ENCODE measurements at regions of chr19 and their contacts with region 1.

Region 1: GRCh38 chr19:38888876-38889275 is 10.5 kb downstream of the SIRT2 start:
- DNase-seq: no peak
- H3K4me3 ChIP-seq: no peak overlapping the region
- H3K27ac ChIP-seq: no peak overlapping the region
- H3K4me1 ChIP-seq: peaks cover 0 to 4% of the 10 kb centered on the region in 2 experiments; a peak in 1 of 4 replicates
- H3K27me3 ChIP-seq: no peaks in the 10 kb centered on the region
- CTCF ChIP-seq: no peak
- EP300 ChIP-seq: no peak
- RAD21 ChIP-seq: no peak

Region 2: GRCh38 chr19:38869856-38870607 is 18.8 kb before region 1 on chr19:
- CTCF ChIA-PET with region 1: interaction called, 39 read pairs
- POLR2A ChIA-PET with region 1: no interaction called
- DNase-seq: peak; percentile 91
- H3K4me3 ChIP-seq: peak overlapping the region; percentile 31 to 35; a peak in 3 of 4 replicates
- H3K27ac ChIP-seq: no peak overlapping the region
- H3K4me1 ChIP-seq: peaks cover 0 to 15% of the 10 kb centered on the region in 2 experiments; a peak in 1 of 4 replicates
- H3K27me3 ChIP-seq: no peaks in the 10 kb centered on the region
- CTCF ChIP-seq: peak; percentile 71
- EP300 ChIP-seq: no peak
- RAD21 ChIP-seq: peak; percentile 55

Region 3: DNA sequence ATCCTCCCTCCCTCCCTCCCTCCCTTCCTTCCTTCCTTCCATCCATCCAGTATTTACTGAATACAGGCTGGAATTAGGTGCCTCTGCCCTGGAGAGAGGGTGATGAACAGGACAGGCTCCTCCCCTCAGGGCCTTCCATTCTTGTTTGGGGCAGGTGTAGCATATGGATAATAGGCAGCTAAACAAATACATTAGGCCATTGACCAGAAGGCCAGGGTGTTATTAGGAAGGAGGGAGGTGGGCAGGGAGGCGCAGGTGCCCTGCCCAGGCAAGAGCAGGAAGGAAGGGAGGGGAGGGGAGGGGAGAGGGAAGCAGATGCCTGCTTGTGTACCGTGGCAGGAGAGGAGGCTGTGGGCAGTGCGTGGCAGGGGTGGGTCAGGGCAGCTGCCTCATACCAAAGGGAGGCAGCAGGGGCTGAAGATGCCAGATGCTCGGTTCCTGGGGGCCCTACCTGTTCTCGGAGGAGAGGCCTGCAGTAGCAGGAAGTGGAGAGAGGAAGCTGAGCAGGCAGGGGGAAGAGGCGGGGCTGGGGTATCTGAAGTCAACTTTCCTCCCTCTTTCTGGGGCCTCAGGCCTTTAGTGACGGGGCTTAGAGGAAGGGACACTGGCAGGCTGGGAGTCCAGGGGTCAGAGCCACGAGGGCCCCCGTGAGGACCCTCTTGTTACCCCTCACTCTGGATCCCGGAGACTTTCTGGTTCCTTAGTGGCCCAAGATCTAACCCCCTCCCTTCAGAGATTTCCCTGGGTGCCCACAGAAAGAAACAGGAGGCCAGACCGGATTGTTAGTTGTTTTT is 10.9 kb before region 1 on chr19 and contains the start of gene RINL:
- CTCF ChIA-PET with region 1: interaction called, 39 read pairs
- POLR2A ChIA-PET with region 1: interaction called, 3 read pairs
- DNase-seq: peak; percentile 49
- H3K4me3 ChIP-seq: no peak within 1 kb of the TSS
- H3K27ac ChIP-seq: peak within 1 kb of the TSS in 1 of 2 experiments; percentile 63; a peak in 2 of 4 replicates
- H3K4me1 ChIP-seq: peaks cover 0 to 12% of the 10 kb centered on the region in 2 experiments; a peak in 1 of 4 replicates
- H3K27me3 ChIP-seq: no peaks in the 10 kb centered on the region
- CTCF ChIP-seq: no peak
- EP300 ChIP-seq: no peak
- RAD21 ChIP-seq: no peak
- polyA plus RNA-seq, gene RINL: 3.8 and 4.0 TPM in 2 replicates

Region 4: DNA sequence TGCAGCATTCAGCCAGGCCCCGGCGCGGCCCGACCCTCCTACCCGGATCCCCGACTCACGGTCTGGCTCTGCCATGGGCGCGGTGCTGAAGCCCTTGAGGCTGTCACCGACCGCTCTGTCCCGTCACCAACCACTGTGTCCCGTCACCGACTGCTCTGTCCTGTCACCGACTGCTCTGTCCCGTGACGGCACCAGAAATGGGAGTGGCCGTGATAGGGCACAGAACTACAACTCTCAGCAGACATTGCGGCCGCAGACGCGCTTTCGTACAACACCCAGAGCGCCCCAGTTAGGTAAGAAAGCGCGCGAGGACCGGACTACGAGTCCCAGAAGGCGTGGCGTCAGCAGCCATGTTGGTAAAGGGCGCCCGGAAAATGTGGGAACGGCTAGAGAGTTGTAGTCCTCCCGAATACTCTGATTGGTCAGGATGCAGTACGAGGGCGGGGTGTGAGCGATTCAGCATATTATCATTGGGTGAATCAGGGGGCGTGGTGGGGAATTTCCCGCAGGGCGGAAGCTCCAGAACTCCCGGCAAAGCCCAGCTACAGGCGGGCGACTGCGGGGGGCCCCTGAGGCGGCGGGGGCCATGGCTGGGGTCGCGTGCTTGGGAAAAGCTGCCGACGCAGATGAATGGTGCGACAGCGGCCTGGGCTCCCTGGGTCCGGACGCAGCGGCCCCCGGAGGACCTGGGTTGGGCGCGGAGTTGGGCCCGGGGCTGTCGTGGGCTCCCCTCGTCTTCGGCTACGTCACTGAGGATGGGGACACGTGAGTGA is 10.8 kb after region 1 on chr19 and contains the starts of genes NFKBIB and SIRT2:
- CTCF ChIA-PET with region 1: interaction called, 19 read pairs
- POLR2A ChIA-PET with region 1: no interaction called
- DNase-seq: peak; percentile 98
- H3K4me3 ChIP-seq: peak within 1 kb of the TSS; percentile 66 to 92
- H3K27ac ChIP-seq: peak within 1 kb of the TSS; percentile 51 to 77
- H3K4me1 ChIP-seq: peaks cover 0 to 9% of the 10 kb centered on the region in 2 experiments; a peak in 2 of 4 replicates
- H3K27me3 ChIP-seq: no peaks in the 10 kb centered on the region
- CTCF ChIP-seq: no peak
- EP300 ChIP-seq: no peak
- RAD21 ChIP-seq: peak; percentile 22; the same call in 1 of the 2 replicates
- polyA plus RNA-seq, gene NFKBIB: 29.6 and 31.8 TPM in 2 replicates
- polyA plus RNA-seq, gene SIRT2: 37.9 and 39.3 TPM in 2 replicates

Region 5: DNA sequence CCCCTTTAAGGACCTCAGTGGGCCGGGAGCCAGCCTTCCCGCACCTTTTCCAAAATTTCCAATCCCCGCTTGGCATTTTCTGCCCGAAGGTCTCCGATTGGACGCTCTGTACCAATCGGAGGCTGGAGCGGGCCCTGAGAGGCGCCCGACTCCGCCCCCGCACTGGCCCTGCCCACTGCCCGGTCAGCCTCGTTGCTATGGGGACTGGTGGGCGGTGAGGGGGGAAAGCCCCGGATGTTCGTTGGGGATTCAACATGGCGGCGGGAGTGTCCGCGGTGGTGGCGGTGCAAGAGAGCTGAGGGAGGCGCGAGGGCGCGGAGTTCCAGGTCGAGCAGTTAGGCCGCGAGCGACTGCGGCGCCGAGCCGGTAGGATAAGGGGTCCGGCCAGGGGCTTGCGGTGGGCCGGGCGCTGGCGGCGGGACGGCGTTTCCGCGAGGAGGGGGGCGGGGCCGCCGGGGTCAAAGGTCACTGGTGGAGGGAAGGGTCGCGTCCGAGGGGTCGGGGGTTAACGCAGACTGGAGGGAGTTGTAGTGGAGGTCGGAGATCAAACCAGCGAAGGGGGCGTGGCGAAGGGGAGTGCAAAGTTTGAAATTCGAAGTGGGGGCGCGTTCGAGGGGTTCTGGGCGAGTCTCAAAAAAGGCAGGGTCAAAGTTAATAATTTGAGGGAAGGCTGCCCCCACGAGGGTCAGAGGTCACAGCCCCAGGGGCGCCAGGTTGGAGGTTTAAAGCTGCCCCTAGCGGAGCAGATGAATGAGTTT is 236.9 kb after region 1 on chr19 and contains the start of gene PAK4:
- CTCF ChIA-PET with region 1: no interaction called
- POLR2A ChIA-PET with region 1: no interaction called
- DNase-seq: peak; percentile 100
- H3K4me3 ChIP-seq: peak within 1 kb of the TSS; percentile 83 to 91
- H3K27ac ChIP-seq: peak within 1 kb of the TSS; percentile 65 to 76; a peak in 3 of 4 replicates
- H3K4me1 ChIP-seq: peaks cover 0 to 40% of the 10 kb centered on the region in 2 experiments; a peak in 1 of 4 replicates
- H3K27me3 ChIP-seq: no peaks in the 10 kb centered on the region
- CTCF ChIP-seq: no peak
- EP300 ChIP-seq: no peak
- RAD21 ChIP-seq: no peak
- polyA plus RNA-seq, gene PAK4: 24.7 and 36.4 TPM in 2 replicates